ENCODE measurements at regions of chr14 and their contacts with region 1.

Region 1: GRCh38 chr14:64434528-64434927 is 30.8 kb upstream of the AKAP5 start:
- DNase-seq: no peak
- ATAC-seq: no peak
- H3K4me3 ChIP-seq: no peak overlapping the region
- H3K4me3 Mint-ChIP-seq: no peak overlapping the region
- H3K27ac ChIP-seq: no peak overlapping the region
- H3K27ac Mint-ChIP-seq: no peak overlapping the region
- H3K4me1 ChIP-seq: peaks cover 6% of the 10 kb centered on the region
- H3K4me1 Mint-ChIP-seq: peaks cover 14% of the 10 kb centered on the region in 2 donors
- H3K27me3 ChIP-seq: no peaks in the 10 kb centered on the region
- H3K27me3 Mint-ChIP-seq: no peaks in the 10 kb centered on the region
- CTCF ChIP-seq: no peak

Region 2: DNA sequence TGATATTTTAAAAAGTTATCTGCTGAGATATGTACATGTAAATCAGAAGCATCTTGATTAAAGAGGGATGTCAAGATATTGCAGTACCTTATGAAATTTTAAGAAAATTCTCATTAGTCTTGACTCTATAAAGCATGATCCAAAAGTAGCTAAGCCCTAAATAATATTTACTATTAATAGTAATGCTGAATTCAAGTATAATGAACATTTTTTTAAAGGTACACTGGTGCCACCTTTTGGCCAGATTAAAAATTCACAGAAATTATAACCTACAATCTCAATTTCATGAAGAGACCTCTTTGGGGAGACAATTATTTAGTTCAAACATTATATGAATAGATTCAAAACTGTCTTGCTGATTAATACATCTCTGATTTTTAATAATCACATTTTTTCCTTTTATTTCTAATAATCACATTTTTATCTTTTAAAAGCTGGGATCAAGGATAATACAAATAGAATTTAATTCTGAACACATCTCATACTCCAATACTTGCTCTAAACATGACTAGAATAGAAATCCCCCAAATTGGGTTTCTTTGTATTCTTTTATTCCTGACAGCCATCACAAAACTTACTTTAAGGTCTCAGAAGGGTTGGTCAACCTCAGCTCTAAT is 44.2 kb after region 1 on chr14:
- intact Hi-C with region 1: loop called (anchors 1 kb)
- DNase-seq: peak in 1 of 2 donors; percentile 67
- ATAC-seq: peak in 2 of 3 donors; percentile 52 to 57
- H3K4me3 ChIP-seq: no peak overlapping the region
- H3K4me3 Mint-ChIP-seq: no peak overlapping the region
- H3K27ac ChIP-seq: no peak overlapping the region
- H3K27ac Mint-ChIP-seq: peak overlapping the region in 1 of 2 donors; percentile 31
- H3K4me1 ChIP-seq: no peaks in the 10 kb centered on the region
- H3K4me1 Mint-ChIP-seq: peaks cover 0 to 4% of the 10 kb centered on the region in 2 donors
- H3K27me3 ChIP-seq: no peaks in the 10 kb centered on the region
- H3K27me3 Mint-ChIP-seq: no peaks in the 10 kb centered on the region
- CTCF ChIP-seq: peak; percentile 76

Region 3: DNA sequence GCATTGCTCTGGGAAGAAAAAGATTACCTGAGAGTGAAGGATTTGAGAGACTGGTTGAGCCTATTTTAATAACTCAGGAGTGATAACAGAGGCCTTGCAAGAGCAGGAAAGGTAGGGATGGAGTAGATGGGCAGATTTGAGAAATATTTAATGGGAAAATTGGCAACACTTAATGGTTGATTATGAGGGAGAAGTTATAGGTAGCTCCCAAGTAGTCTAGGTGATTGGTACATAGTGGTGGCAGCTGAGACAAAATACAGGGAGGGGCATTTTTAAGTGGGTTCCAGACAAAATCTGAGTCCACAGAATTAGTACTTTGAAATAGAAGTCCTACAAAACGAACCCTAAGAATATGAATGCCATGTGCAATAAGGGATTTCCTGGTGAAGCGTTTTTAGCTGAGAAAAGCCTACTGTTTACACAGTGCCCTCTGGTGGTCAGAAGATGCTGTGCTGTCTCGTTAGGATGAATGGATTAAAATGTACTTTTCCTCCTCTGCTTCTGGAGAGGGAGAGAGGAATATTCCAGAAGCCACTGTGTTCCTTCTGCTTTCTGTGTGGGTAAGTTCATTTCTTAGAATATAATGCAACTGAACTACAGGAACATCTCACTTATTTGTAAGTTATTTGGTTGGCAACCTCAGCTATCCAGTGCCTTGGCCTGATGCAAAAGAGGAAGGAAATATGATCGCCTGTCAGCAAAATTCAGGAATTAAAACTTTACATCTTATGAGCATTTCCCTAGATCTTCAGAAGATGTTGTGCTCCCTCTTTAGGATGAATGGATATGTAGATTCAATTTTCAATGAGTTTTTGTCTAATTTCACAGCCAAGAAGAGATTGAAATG is 76.5 kb after region 1 on chr14:
- intact Hi-C with region 1: loop called (anchors 1 kb)
- DNase-seq: peak; percentile 49 to 90
- ATAC-seq: peak; percentile 73 to 85 (median 78)
- H3K4me3 ChIP-seq: no peak overlapping the region
- H3K4me3 Mint-ChIP-seq: no peak overlapping the region
- H3K27ac ChIP-seq: peak overlapping the region; percentile 39
- H3K27ac Mint-ChIP-seq: peak overlapping the region; percentile 15 to 73
- H3K4me1 ChIP-seq: peaks cover 22% of the 10 kb centered on the region
- H3K4me1 Mint-ChIP-seq: peaks cover 82 to 86% of the 10 kb centered on the region in 2 donors
- H3K27me3 ChIP-seq: no peaks in the 10 kb centered on the region
- H3K27me3 Mint-ChIP-seq: no peaks in the 10 kb centered on the region
- CTCF ChIP-seq: peak; percentile 91

Measured in natural killer cell (primary cell).